ENCODE measurements at regions of chr2 and their contacts with region 1.

Region 1: DNA sequence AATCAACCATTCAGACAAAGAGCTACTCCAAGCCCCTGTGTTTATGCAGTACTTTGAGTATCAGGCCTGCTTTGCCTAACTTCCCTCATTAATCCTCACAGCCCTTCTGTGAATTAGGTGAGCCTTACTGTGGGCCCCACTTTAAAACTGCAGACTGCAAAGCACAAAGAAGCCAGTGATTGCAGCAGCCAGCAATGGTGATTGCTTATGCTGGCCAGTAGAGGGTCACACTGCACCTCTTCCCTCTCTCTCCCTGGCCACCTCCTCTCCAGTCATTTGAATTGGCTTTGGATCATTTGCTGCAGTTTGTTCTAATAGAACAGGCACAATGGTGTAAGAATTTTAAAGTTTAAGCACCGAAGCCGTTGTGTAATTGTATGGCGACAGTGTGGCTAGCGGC is 229.9 kb downstream of the AGPS start:
- DNase-seq: no peak
- H3K4me3 ChIP-seq: no peak overlapping the region
- H3K27ac ChIP-seq: no peak overlapping the region
- H3K4me1 ChIP-seq: peaks cover 6% of the 10 kb centered on the region
- H3K27me3 ChIP-seq: no peaks in the 10 kb centered on the region
- CTCF ChIP-seq: no peak
- POLR2A ChIP-seq: no peak

Region 2: DNA sequence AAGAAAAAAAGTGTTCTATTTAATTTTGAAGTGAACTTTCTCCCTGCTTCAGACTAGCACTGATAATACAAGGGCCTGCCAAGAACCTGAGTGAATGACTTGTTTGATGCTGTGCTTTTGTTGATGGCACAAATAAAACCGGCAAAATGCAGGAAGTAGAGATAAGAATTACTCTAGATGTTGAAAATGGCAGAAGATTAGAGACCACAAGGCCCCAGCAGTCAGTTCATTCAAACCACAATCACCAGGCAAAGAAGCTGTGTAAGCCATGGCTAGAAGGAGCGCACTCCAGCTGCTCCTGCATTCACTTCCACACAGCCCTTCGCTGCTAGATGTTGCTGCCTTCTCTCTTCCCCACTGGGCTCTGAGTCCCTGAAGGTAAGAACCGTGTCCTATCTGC is 67.1 kb after region 1 on chr2:
- intact Hi-C with region 1: loop called (anchors 10 kb)
- DNase-seq: no peak
- H3K4me3 ChIP-seq: no peak overlapping the region
- H3K27ac ChIP-seq: no peak overlapping the region
- H3K4me1 ChIP-seq: no peaks in the 10 kb centered on the region
- H3K27me3 ChIP-seq: no peaks in the 10 kb centered on the region
- CTCF ChIP-seq: no peak
- POLR2A ChIP-seq: no peak

Region 3: GRCh38 chr2:179302764-179303571 is 1680.4 kb after region 1 on chr2:
- intact Hi-C with region 1: no loop called
- DNase-seq: no peak
- H3K4me3 ChIP-seq: no peak overlapping the region
- H3K27ac ChIP-seq: no peak overlapping the region
- H3K4me1 ChIP-seq: no peaks in the 10 kb centered on the region
- H3K27me3 ChIP-seq: no peaks in the 10 kb centered on the region
- CTCF ChIP-seq: no peak
- POLR2A ChIP-seq: no peak

Measured in vagina (tissue), 2 donors.